Mucosa of descending colon (tissue), 3 donors: ENCODE measurements at regions of chr10 and their contacts with region 1.

Region 1: GRCh38 chr10:121734589-121735045 is 136.4 kb upstream of the FGFR2 start:
- DNase-seq: peak in 1 of 3 donors; percentile 25
- ATAC-seq: no peak
- H3K4me3 ChIP-seq: no peak overlapping the region
- H3K4me1 ChIP-seq: no peaks in the 10 kb centered on the region
- CTCF ChIP-seq: peak; percentile 53

Region 2: GRCh38 chr10:120942806-120943413 is 791.7 kb before region 1 on chr10:
- intact Hi-C with region 1: loop called (anchors 5 to 10 kb)
- DNase-seq: peak; percentile 74 to 89 (median 86)
- ATAC-seq: peak; percentile 94
- H3K4me3 ChIP-seq: no peak overlapping the region
- H3K4me1 ChIP-seq: no peaks in the 10 kb centered on the region
- CTCF ChIP-seq: peak; percentile 71

Region 3: GRCh38 chr10:121608469-121609190 is 126.0 kb before region 1 on chr10:
- intact Hi-C with region 1: no loop called
- DNase-seq: peak; percentile 72 to 84 (median 75)
- ATAC-seq: peak; percentile 95
- H3K4me3 ChIP-seq: no peak overlapping the region
- H3K4me1 ChIP-seq: no peaks in the 10 kb centered on the region
- CTCF ChIP-seq: peak; percentile 93

Region 4: DNA sequence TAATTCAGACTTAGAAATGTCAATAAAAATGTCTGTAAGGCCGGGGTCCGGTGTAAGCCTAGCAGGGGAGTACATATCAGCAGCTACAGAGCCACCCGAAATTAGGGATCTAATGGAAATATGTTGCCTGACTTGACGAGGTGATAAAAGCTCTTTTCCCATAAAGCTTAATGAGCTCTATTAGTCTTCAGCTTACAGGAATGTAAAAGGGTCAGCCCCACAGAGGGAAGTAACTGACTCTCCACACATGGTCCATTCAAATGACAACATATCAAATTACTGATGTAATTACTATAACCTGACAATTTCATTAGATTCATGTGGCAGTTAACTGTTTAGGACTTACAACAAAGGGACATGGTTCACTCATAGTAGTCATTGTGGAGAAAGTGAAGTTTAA is 130.9 kb after region 1 on chr10:
- intact Hi-C with region 1: no loop called
- DNase-seq: no peak
- ATAC-seq: no peak
- H3K4me3 ChIP-seq: no peak overlapping the region
- H3K4me1 ChIP-seq: no peaks in the 10 kb centered on the region
- CTCF ChIP-seq: no peak

Region 5: DNA sequence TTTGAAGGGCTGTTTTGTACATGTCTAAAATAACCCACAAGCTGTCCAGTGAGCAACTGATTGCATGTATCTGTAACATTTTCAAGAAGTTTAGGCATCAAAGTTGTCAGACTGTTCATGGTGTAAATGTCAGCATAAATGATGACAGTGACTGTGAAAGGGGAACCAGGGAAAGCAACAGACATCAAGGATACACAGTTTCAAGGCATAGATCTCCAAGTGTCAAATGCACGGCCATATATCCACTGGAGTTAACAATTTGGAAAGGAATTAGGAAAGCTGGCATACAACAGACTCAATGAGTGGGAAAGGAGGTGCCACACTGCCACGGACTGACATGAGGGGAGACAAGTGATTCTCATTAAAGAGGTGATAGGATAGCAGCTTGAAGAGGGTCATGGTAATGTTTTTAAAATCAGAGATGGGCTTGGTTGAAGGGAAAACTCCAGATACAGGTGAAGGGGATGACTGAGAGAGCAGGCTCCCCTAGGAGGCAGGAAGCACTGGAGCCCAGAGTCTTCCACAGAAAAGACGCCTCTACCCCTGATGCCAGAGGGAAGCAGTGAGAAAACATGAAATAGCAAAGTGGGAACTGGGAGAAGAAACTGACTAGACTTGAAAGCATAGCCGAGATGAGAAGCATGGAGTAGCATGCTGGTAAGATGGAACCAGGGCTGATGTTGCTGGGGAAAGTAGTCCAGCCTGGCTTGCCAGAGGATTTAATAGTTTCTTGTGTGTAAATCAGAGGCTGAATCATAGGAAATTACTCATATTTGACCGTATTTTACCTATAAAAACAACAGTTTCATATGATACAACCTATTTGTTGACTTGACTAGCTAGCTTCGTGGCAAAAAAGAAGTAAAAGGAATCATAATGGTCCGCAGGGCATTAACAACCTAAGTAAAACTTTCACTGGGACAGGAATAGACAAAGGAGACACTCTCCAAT is 221.8 kb after region 1 on chr10:
- intact Hi-C with region 1: no loop called
- DNase-seq: no peak
- ATAC-seq: no peak
- H3K4me3 ChIP-seq: no peak overlapping the region
- H3K4me1 ChIP-seq: no peaks in the 10 kb centered on the region
- CTCF ChIP-seq: no peak

Region 6: GRCh38 chr10:121988356-121989316 is 254.0 kb after region 1 on chr10 and contains the start of gene TACC2:
- intact Hi-C with region 1: no loop called
- DNase-seq: no peak
- ATAC-seq: no peak
- H3K4me3 ChIP-seq: no peak within 1 kb of the TSS
- H3K4me1 ChIP-seq: no peaks in the 10 kb centered on the region
- CTCF ChIP-seq: no peak
- total RNA-seq, gene TACC2: 97.5 to 170 (median 133) TPM